ENCODE measurements at regions of chr18 and their contacts with region 1.

Region 1: GRCh38 chr18:43507842-43508481 is 230.7 kb upstream of the SYT4 start:
- DNase-seq: no peak
- ATAC-seq: no peak
- H3K4me3 ChIP-seq: no peak overlapping the region
- H3K4me3 Mint-ChIP-seq: no peak overlapping the region
- H3K27ac ChIP-seq: no peak overlapping the region
- H3K27ac Mint-ChIP-seq: no peak overlapping the region
- H3K4me1 ChIP-seq: no peaks in the 10 kb centered on the region
- H3K4me1 Mint-ChIP-seq: no peaks in the 10 kb centered on the region
- H3K27me3 ChIP-seq: no peaks in the 10 kb centered on the region
- H3K27me3 Mint-ChIP-seq: no peaks in the 10 kb centered on the region
- CTCF ChIP-seq: no peak

Region 2: DNA sequence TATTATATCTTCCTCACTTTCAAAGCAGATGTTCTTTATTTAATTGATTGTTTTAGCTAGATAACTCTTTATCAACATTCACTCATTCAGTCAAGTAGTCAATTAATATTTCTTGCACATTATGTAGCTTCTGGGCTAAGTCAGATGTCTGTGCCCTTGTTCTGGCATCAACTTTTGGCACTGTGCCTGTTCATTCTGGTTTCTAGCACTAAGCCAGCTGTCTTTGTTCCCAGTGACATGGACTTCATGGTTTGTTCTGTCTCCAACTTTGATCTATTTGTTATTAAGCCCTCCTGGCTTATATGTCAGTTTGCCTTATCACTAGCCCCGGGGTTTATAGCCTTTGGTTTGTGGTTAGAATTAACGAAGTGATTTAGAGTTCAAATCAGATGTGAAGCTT is 17.2 kb after region 1 on chr18:
- CTCF ChIA-PET with region 1: no interaction called
- POLR2A ChIA-PET with region 1: no interaction called
- intact Hi-C with region 1: loop called in 1 of 2 experiments (anchors 2 kb)
- DNase-seq: no peak
- ATAC-seq: no peak
- H3K4me3 ChIP-seq: no peak overlapping the region
- H3K4me3 Mint-ChIP-seq: no peak overlapping the region
- H3K27ac ChIP-seq: no peak overlapping the region
- H3K27ac Mint-ChIP-seq: no peak overlapping the region
- H3K4me1 ChIP-seq: no peaks in the 10 kb centered on the region
- H3K4me1 Mint-ChIP-seq: no peaks in the 10 kb centered on the region
- H3K27me3 ChIP-seq: no peaks in the 10 kb centered on the region
- H3K27me3 Mint-ChIP-seq: no peaks in the 10 kb centered on the region
- CTCF ChIP-seq: no peak

Region 3: DNA sequence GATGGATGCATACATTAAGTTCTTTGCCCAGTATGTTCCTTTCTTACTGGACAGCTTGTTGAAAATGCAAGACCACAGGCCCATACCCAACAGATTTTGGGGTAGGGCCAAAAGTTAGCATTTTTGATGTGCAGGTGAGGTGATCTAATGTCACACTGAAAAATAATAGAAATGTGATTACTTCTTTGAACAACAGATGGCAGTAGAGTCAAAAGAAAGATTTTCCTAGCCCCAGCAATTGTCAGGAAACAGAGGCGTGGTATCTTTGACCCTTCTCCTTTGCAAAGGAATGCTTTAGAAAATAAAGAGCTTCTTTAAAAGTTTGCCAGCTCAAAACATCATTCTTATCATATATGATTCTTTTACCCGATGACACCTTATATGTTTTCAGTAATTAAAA is 113.0 kb after region 1 on chr18:
- CTCF ChIA-PET with region 1: no interaction called
- POLR2A ChIA-PET with region 1: no interaction called
- intact Hi-C with region 1: no loop called
- DNase-seq: peak in 3 of 14 experiments; percentile 8 to 9 (median 9)
- ATAC-seq: no peak
- H3K4me3 ChIP-seq: no peak overlapping the region
- H3K4me3 Mint-ChIP-seq: no peak overlapping the region
- H3K27ac ChIP-seq: no peak overlapping the region
- H3K27ac Mint-ChIP-seq: no peak overlapping the region
- H3K4me1 ChIP-seq: no peaks in the 10 kb centered on the region
- H3K4me1 Mint-ChIP-seq: no peaks in the 10 kb centered on the region
- H3K27me3 ChIP-seq: no peaks in the 10 kb centered on the region
- H3K27me3 Mint-ChIP-seq: no peaks in the 10 kb centered on the region
- CTCF ChIP-seq: no peak

Region 4: GRCh38 chr18:43661570-43661969 is 153.6 kb after region 1 on chr18:
- CTCF ChIA-PET with region 1: no interaction called
- POLR2A ChIA-PET with region 1: no interaction called
- intact Hi-C with region 1: no loop called
- DNase-seq: no peak
- ATAC-seq: no peak
- H3K4me3 ChIP-seq: no peak overlapping the region
- H3K4me3 Mint-ChIP-seq: no peak overlapping the region
- H3K27ac ChIP-seq: no peak overlapping the region
- H3K27ac Mint-ChIP-seq: no peak overlapping the region
- H3K4me1 ChIP-seq: no peaks in the 10 kb centered on the region
- H3K4me1 Mint-ChIP-seq: no peaks in the 10 kb centered on the region
- H3K27me3 ChIP-seq: no peaks in the 10 kb centered on the region
- H3K27me3 Mint-ChIP-seq: no peaks in the 10 kb centered on the region
- CTCF ChIP-seq: no peak